ENCODE measurements at regions of chr7 and their contacts with region 1.

Region 1: GRCh38 chr7:73858807-73859206 is 2.2 kb upstream of the TMEM270 start:
- DNase-seq: no peak
- H3K4me3 ChIP-seq: no peak overlapping the region
- H3K27ac ChIP-seq: no peak overlapping the region
- H3K4me1 ChIP-seq: no peaks in the 10 kb centered on the region
- H3K27me3 ChIP-seq: no peaks in the 10 kb centered on the region
- CTCF ChIP-seq: no peak
- POLR2A ChIP-seq: no peak

Region 2: DNA sequence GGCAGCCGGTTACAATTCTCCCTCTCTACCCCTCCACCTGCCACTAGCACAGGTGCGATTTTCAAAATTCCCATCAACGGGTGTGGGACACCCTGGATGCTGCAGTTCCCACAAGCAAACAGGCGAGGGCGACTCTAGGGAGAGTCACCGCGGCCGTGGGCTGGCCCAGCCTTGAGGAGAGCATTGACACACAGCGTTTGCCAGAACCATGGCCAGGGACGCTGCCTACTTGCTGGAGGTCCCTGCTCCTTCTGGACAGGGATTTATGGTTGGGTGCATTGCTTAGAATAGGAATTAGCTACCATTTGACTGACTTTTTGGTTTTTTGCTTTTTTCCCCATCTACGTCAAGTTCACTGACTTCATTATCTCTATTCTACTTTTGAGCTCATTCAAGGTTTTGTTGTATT is 47.0 kb before region 1 on chr7:
- intact Hi-C with region 1: loop called (anchors 5 kb)
- DNase-seq: peak; percentile 43 to 52
- H3K4me3 ChIP-seq: no peak overlapping the region
- H3K27ac ChIP-seq: no peak overlapping the region
- H3K4me1 ChIP-seq: no peaks in the 10 kb centered on the region
- H3K27me3 ChIP-seq: no peaks in the 10 kb centered on the region
- CTCF ChIP-seq: peak; percentile 77 to 79 (median 78)
- POLR2A ChIP-seq: no peak

Measured in uterus (tissue), 4 donors.